A673 (cell line): ENCODE measurements at regions of chr12 and their contacts with region 1.

Region 1: DNA sequence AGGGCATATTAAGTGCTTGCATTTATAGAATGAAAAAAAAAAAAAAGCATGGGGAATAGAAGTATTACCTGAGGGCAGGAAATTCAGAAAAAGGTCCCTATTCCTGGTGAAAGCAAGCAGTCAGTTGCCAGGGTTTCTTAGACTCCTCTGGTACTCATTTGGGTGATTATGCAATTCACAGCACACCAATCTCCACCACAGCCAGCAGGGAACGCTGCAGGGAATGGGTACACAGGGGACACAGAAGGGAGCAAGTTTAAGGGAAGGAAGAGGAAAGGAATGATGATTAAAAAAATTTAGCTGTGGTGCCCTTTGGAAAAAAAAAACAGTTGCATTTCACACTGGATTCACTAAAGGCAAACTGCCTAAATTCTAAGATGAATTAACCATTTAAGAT is 14.2 kb downstream of the BLTP3B start:
- DNase-seq: peak; percentile 93
- H3K4me3 ChIP-seq: peak overlapping the region; percentile 10
- H3K27ac ChIP-seq: peak overlapping the region; percentile 87
- H3K4me1 ChIP-seq: peaks cover 44% of the 10 kb centered on the region
- H3K27me3 ChIP-seq: no peaks in the 10 kb centered on the region
- CTCF ChIP-seq: peak; percentile 70

Region 2: GRCh38 chr12:99552022-99552421 is 576.5 kb before region 1 on chr12:
- CTCF ChIA-PET with region 1: no interaction called
- POLR2A ChIA-PET with region 1: interaction called, 11 read pairs
- intact Hi-C with region 1: no loop called
- DNase-seq: no peak
- H3K4me3 ChIP-seq: no peak overlapping the region
- H3K27ac ChIP-seq: no peak overlapping the region
- H3K4me1 ChIP-seq: no peaks in the 10 kb centered on the region
- H3K27me3 ChIP-seq: no peaks in the 10 kb centered on the region
- CTCF ChIP-seq: no peak

Region 3: DNA sequence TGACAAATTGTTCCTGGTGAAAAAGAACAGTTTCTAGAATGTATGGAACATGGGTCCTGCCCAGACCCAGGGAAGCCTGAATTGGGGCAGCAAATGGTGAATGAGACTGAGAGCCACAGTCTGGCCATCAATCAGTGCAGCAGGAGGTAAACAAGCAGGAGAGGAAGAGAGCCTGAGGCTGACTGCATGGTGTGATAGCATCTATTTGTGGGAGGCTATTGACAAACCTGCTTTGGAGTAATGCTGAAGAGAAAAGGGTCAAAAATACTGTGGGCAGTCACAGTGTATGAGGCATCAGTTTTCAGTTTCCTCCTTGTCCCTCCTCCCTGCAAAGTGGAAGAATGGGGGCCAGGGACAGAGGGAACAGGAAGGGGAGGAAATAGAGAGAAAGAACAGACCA is 280.6 kb before region 1 on chr12:
- CTCF ChIA-PET with region 1: no interaction called
- POLR2A ChIA-PET with region 1: no interaction called
- intact Hi-C with region 1: no loop called
- DNase-seq: no peak
- H3K4me3 ChIP-seq: no peak overlapping the region
- H3K27ac ChIP-seq: no peak overlapping the region
- H3K4me1 ChIP-seq: no peaks in the 10 kb centered on the region
- H3K27me3 ChIP-seq: no peaks in the 10 kb centered on the region
- CTCF ChIP-seq: no peak

Region 4: GRCh38 chr12:100200463-100201181 is 72.1 kb after region 1 on chr12 and contains the start of gene ACTR6:
- CTCF ChIA-PET with region 1: interaction called, 4 read pairs
- POLR2A ChIA-PET with region 1: no interaction called
- intact Hi-C with region 1: loop called (anchors 5 kb)
- DNase-seq: peak; percentile 98
- H3K4me3 ChIP-seq: peak within 1 kb of the TSS; percentile 86
- H3K27ac ChIP-seq: peak within 1 kb of the TSS; percentile 71
- H3K4me1 ChIP-seq: peaks cover 3% of the 10 kb centered on the region
- H3K27me3 ChIP-seq: no peaks in the 10 kb centered on the region
- CTCF ChIP-seq: 0 out of 2 replicates have a peak, but pooled peaks have one; percentile 22
- total RNA-seq, gene ACTR6: 36.0 and 39.7 TPM in 2 replicates